Gastrocnemius medialis (tissue), 4 donors: ENCODE measurements at regions of chr9 and their contacts with region 1.

Region 1: GRCh38 chr9:113913426-113914195 is 37.5 kb downstream of the ZNF618 start:
- DNase-seq: peak; percentile 68 to 85
- ATAC-seq: peak; percentile 100
- H3K4me3 ChIP-seq: no peak overlapping the region
- H3K27ac ChIP-seq: peak overlapping the region; percentile 72 to 82 (median 78)
- H3K4me1 ChIP-seq: peaks cover 22 to 40% of the 10 kb centered on the region in 2 donors
- H3K27me3 ChIP-seq: no peaks in the 10 kb centered on the region
- CTCF ChIP-seq: no peak
- POLR2A ChIP-seq: no peak

Region 2: GRCh38 chr9:113876151-113876992 is 37.2 kb before region 1 on chr9 and contains the start of gene ZNF618:
- in situ Hi-C with region 1: no loop called
- intact Hi-C with region 1: loop called (anchors 5 kb)
- DNase-seq: no peak
- ATAC-seq: peak; percentile 51 to 75
- H3K4me3 ChIP-seq: peak within 1 kb of the TSS; percentile 86 to 95 (median 94)
- H3K27ac ChIP-seq: peak within 1 kb of the TSS; percentile 58 to 67 (median 64)
- H3K4me1 ChIP-seq: peaks cover 9% of the 10 kb centered on the region in 2 donors
- H3K27me3 ChIP-seq: no peaks in the 10 kb centered on the region
- CTCF ChIP-seq: peak in 2 of 5 experiments; percentile 56 to 62
- POLR2A ChIP-seq: no peak
- total RNA-seq, gene ZNF618: 0.26 to 1.2 (median 1.0) TPM

Region 3: GRCh38 chr9:114271641-114272081 is 358.1 kb after region 1 on chr9:
- in situ Hi-C with region 1: no loop called
- intact Hi-C with region 1: loop called (anchors 10 kb)
- DNase-seq: peak; percentile 27 to 57
- ATAC-seq: peak; percentile 70 to 82
- H3K4me3 ChIP-seq: no peak overlapping the region
- H3K27ac ChIP-seq: no peak overlapping the region
- H3K4me1 ChIP-seq: peaks cover under 1 to 2% of the 10 kb centered on the region in 2 donors
- H3K27me3 ChIP-seq: no peaks in the 10 kb centered on the region
- CTCF ChIP-seq: peak; percentile 47 to 74 (median 63)
- POLR2A ChIP-seq: no peak

Region 4: GRCh38 chr9:114417511-114417910 is 503.9 kb after region 1 on chr9:
- in situ Hi-C with region 1: no loop called
- intact Hi-C with region 1: no loop called
- DNase-seq: no peak
- ATAC-seq: no peak
- H3K4me3 ChIP-seq: no peak overlapping the region
- H3K27ac ChIP-seq: no peak overlapping the region
- H3K4me1 ChIP-seq: no peaks in the 10 kb centered on the region
- H3K27me3 ChIP-seq: no peaks in the 10 kb centered on the region
- CTCF ChIP-seq: no peak
- POLR2A ChIP-seq: no peak

Region 5: GRCh38 chr9:114681594-114682332 is 768.2 kb after region 1 on chr9 and contains the start of gene TEX48:
- in situ Hi-C with region 1: no loop called
- intact Hi-C with region 1: no loop called
- DNase-seq: peak in 1 of 2 donors; percentile 19
- ATAC-seq: no peak
- H3K4me3 ChIP-seq: no peak within 1 kb of the TSS
- H3K27ac ChIP-seq: no peak within 1 kb of the TSS
- H3K4me1 ChIP-seq: no peaks in the 10 kb centered on the region
- H3K27me3 ChIP-seq: peaks cover 0 to 3% (median 0%) of the 10 kb centered on the region in 3 donors
- CTCF ChIP-seq: peak in 2 of 5 experiments; percentile 42 to 47
- POLR2A ChIP-seq: no peak
- total RNA-seq, gene TEX48: not detected